Caco-2 (cell line): ENCODE measurements at regions of chr4 and their contacts with region 1.

Region 1: DNA sequence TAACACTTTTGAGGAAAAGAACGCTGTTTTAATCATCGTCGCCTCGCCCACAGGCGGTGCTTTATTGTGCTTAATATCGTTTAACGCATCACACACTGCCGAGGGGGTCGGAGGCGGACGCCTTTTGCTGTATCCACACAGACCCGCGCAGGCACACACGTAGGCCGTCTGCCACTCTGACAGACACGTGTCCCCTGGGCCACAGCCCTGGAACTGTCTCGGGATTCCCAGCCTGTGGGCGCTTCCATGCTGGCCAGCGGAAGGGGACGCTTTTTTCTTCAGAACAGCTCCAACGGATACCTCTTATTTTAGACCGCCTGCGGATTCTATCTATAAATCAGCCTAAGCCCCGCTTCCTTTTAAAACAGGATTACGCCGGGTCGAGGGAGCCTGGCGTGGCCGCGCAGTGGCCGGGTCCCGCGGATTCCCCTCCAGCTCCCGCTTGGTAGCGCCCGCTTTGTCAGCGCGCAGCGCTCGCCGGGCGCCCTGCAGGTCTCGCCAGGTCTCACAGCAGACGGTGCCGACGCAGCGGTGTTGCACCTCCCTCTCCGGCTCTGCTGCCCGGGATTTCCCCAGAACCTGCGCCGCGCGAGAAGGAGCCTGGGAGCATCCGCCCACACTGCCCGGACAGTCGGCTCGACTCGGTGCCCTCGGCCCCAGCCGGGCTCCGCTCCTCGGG is at the start of gene NOCT:
- DNase-seq: peak; percentile 91 to 92
- H3K4me3 ChIP-seq: peak within 1 kb of the TSS; percentile 76
- H3K4me3 Mint-ChIP-seq: peak within 1 kb of the TSS; percentile 72
- H3K27ac Mint-ChIP-seq: peak within 1 kb of the TSS; percentile 83
- H3K4me1 ChIP-seq: peaks cover 37% of the 10 kb centered on the region
- H3K4me1 Mint-ChIP-seq: peaks cover 35% of the 10 kb centered on the region
- H3K27me3 ChIP-seq: no peaks in the 10 kb centered on the region
- H3K27me3 Mint-ChIP-seq: no peaks in the 10 kb centered on the region
- CTCF ChIP-seq: no peak
- total RNA-seq, gene NOCT: 21.5 and 25.4 TPM in 2 replicates

Region 2: DNA sequence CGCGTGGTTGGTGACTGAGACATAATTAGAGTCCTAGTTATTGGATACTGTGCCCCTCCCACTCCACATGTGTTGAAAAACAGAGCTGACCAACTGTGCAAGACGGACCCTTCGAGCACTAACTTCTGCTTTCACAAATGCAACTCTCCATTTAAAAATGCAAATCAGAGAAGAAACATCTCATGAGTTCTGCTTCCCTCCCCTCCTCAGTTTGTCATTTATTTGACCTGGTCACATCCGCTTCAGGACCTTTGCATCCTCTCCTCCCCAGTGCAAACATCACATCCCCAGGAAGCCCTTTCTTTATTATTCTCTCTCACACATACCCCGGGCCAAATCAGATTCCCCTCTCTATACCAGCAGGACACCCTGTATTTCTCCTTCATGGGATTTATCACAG is 37.9 kb before region 1 on chr4:
- CTCF ChIA-PET with region 1: no interaction called
- POLR2A ChIA-PET with region 1: interaction called, 11 read pairs
- intact Hi-C with region 1: loop called (anchors 1 kb)
- DNase-seq: no peak
- H3K4me3 ChIP-seq: no peak overlapping the region
- H3K4me3 Mint-ChIP-seq: peak overlapping the region; percentile 25
- H3K27ac Mint-ChIP-seq: peak overlapping the region; percentile 78
- H3K4me1 ChIP-seq: peaks cover 55% of the 10 kb centered on the region
- H3K4me1 Mint-ChIP-seq: peaks cover 27% of the 10 kb centered on the region
- H3K27me3 ChIP-seq: no peaks in the 10 kb centered on the region
- H3K27me3 Mint-ChIP-seq: no peaks in the 10 kb centered on the region
- CTCF ChIP-seq: no peak

Region 3: GRCh38 chr4:139665690-139666529 is 650.5 kb after region 1 on chr4 and contains the start of gene MGST2:
- CTCF ChIA-PET with region 1: no interaction called
- POLR2A ChIA-PET with region 1: no interaction called
- intact Hi-C with region 1: no loop called
- DNase-seq: peak; percentile 92 to 97
- H3K4me3 ChIP-seq: peak within 1 kb of the TSS; percentile 52
- H3K4me3 Mint-ChIP-seq: peak within 1 kb of the TSS; percentile 90
- H3K27ac Mint-ChIP-seq: peak within 1 kb of the TSS; percentile 94
- H3K4me1 ChIP-seq: peaks cover 83% of the 10 kb centered on the region
- H3K4me1 Mint-ChIP-seq: peaks cover 53% of the 10 kb centered on the region
- H3K27me3 ChIP-seq: no peaks in the 10 kb centered on the region
- H3K27me3 Mint-ChIP-seq: no peaks in the 10 kb centered on the region
- CTCF ChIP-seq: no peak
- total RNA-seq, gene MGST2: 81.7 and 88.4 TPM in 2 replicates